K562 (cell line): ENCODE measurements at regions of chr12 and their contacts with region 1.

Region 1: GRCh38 chr12:4107436-4107878 is 166.1 kb upstream of the CCND2 start:
- DNase-seq: peak; percentile 57 to 67 (median 62)
- ATAC-seq: peak; percentile 96
- H3K4me3 ChIP-seq: no peak overlapping the region
- H3K27ac ChIP-seq: no peak overlapping the region
- H3K4me1 ChIP-seq: no peaks in the 10 kb centered on the region
- H3K27me3 ChIP-seq: peaks cover 7 to 10% of the 10 kb centered on the region in 2 experiments; a peak in 3 of 5 replicates
- CTCF ChIP-seq: peak; percentile 51 to 67 (median 66)
- EP300 ChIP-seq: no peak
- POLR2A ChIP-seq: no peak
- RAD21 ChIP-seq: peak; percentile 55 to 78

Region 2: DNA sequence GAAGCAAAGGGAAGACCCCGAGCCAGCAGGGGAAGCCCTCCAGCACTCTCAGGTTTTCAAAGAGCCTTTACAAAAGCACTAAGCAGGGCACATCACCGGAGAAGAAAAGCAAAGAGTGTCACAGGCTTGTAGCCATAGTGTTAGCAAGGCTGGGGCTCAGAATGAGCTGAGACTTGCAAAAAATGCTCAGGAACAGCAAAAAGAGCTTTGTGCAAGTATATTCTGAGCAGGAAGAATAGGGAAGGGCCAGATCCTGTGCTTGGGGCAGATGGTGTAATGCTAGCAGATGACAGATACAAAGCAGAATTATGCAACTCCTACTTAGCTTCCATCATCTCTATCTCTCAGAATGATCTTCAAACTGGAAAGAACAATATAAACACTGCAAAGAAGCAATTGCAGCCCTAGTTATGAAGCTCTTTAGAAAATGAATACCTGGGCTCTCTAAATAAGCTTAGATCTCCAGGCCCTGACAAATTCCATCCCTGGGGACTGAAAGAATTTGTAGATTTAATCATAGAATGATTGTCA is 210.6 kb before region 1 on chr12:
- CTCF ChIA-PET with region 1: no interaction called
- POLR2A ChIA-PET with region 1: no interaction called
- in situ Hi-C with region 1: no loop called
- intact Hi-C with region 1: no loop called
- DNase-seq: no peak
- ATAC-seq: no peak
- H3K4me3 ChIP-seq: no peak overlapping the region
- H3K27ac ChIP-seq: no peak overlapping the region
- H3K4me1 ChIP-seq: no peaks in the 10 kb centered on the region
- H3K27me3 ChIP-seq: 0 out of 5 replicates have a peak, but pooled peaks cover 0 to 4% of the 10 kb centered on the region in 2 experiments
- CTCF ChIP-seq: no peak
- EP300 ChIP-seq: no peak
- POLR2A ChIP-seq: no peak
- RAD21 ChIP-seq: no peak

Region 3: DNA sequence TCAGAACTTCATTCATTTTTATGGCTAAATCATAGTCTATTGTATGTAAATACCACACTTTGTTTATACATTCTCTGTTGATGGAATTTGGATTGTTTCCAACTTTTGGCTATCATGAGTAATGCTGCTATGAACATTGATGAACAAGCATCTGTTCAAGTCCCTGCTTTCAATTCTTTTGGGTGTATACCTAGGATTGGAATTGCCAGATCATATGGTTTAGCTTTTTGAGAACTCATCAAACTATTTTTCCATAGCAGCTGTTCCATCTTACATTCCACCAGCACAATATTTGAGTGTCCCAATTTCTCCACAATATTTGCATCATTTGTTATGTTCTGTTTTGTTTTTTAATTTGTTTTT is 113.8 kb after region 1 on chr12:
- CTCF ChIA-PET with region 1: no interaction called
- POLR2A ChIA-PET with region 1: no interaction called
- in situ Hi-C with region 1: no loop called
- intact Hi-C with region 1: loop called (anchors 10 kb)
- DNase-seq: no peak
- ATAC-seq: no peak
- H3K4me3 ChIP-seq: no peak overlapping the region
- H3K27ac ChIP-seq: no peak overlapping the region
- H3K4me1 ChIP-seq: no peaks in the 10 kb centered on the region
- H3K27me3 ChIP-seq: peaks cover 6 to 12% of the 10 kb centered on the region in 2 experiments
- CTCF ChIP-seq: no peak
- EP300 ChIP-seq: no peak
- POLR2A ChIP-seq: no peak
- RAD21 ChIP-seq: no peak